Ascending aorta (tissue), 2 donors: ENCODE measurements at regions of chr22 and their contacts with region 1.

Region 1: DNA sequence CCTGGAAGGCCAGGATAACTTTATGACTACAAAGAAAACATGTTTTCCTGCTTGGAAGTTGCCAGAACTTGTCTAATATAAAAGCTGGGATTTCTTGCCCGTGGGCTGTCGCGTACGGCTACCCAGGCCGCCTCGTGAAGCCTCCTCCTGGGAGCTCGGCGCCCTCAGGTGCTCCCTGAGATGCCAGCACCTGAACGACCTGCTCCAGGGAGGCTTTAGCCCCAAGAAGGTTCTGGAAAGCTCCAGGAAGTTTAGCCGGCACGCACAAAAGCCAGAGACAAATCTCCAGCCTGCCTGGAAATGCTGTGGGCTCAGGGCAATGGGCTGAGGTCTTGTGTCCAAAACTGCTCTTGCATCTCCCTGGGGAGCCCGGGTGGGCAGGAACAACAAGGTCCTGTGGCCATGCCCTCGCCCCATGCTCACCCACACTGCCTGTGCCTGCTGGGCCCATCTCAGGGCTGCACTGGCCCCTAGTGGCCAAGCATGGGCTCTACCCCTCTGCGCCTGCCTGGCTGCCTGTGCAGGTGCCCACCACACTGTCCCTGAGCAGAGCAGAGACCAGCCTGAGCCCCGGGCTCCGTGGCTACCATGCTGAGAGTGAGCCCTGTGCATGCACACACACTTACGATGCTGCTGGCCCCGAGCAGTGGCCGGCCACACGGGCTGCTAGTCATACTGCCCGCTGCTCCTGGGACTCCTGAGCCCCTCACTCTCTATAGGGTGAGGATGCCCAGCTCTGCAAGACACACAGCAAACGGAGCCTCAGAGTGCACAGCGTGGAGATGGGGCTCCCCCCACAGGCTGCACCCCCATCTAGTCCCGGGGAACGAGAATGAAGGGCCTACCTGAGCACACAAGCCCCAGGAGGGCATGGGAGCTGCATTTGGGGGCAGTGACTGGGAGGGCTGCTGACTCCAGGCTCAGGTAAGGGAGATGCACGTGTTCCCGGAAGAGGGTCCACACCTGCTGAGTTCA is 4.9 kb upstream of the CELSR1 start:
- DNase-seq: peak in 1 of 2 donors; percentile 78
- H3K4me3 ChIP-seq: no peak overlapping the region
- H3K27ac ChIP-seq: no peak overlapping the region
- H3K4me1 ChIP-seq: peaks cover 8 to 21% of the 10 kb centered on the region in 2 donors
- H3K27me3 ChIP-seq: peaks cover 8% of the 10 kb centered on the region
- CTCF ChIP-seq: peak; percentile 76 to 85 (median 85)

Region 2: DNA sequence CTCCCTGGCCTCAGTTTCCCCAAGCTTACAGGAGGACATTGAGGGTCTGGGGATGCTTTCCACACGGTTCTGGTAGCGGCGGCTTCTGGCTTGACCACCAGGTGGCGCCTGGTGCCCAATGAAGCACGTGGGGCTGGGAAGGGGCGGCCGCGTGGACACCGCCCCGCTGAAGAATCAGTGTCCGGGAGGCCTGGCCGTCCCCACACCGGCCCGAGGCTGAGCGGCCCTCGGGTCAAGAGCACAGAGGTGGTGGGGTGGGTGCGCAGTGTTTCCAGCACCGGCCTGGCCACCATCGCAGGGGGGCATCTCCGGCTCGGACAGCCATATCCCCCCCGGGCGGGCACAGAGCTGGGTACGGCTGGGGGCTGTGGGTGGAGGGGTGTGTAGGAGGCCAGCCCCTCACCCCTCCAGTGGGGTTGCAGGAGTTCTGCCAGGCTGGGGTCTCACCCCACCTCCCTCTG is 419.8 kb before region 1 on chr22:
- intact Hi-C with region 1: loop called (anchors 1 kb)
- DNase-seq: no peak
- H3K4me3 ChIP-seq: peak overlapping the region in 1 of 2 donors; percentile 14
- H3K27ac ChIP-seq: no peak overlapping the region
- H3K4me1 ChIP-seq: peaks cover 0 to 4% of the 10 kb centered on the region in 2 donors
- H3K27me3 ChIP-seq: no peaks in the 10 kb centered on the region
- CTCF ChIP-seq: peak; percentile 87 to 98 (median 97)

Region 3: GRCh38 chr22:46171940-46172339 is 370.4 kb before region 1 on chr22:
- intact Hi-C with region 1: no loop called
- DNase-seq: peak in 1 of 2 donors; percentile 56
- H3K4me3 ChIP-seq: no peak overlapping the region
- H3K27ac ChIP-seq: no peak overlapping the region
- H3K4me1 ChIP-seq: peaks cover 0 to 4% of the 10 kb centered on the region in 2 donors
- H3K27me3 ChIP-seq: no peaks in the 10 kb centered on the region
- CTCF ChIP-seq: no peak

Region 4: DNA sequence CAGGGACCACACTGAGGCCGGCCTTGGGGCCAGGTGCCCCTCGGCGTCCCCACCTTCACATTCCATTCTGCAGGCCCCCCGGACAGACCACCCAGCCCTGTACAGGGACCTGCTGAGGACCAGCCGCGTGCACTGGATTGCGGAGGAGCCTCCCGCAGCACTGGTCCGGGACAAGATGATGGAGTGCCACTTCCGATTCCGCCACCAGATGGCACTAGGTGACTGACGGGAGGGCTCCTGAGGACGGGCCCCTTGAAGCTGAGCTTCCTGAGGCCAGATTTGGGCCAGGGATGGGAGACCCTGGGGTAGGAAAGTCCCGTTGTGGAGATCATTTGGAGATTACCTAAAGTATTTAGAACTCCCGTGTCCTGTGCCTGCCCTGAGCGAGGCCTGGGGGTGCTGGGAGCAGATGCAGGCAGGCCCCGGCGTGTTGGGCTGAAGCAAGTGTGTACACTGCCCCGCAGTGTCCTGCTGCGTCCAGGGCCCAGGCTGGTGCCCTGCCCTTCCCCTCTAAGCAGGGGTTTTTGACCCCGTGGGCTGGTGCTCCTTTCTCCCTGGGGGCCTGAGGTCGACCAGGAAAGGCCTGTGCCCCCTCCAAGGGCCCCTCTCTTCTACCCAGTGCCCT is 186.8 kb before region 1 on chr22:
- intact Hi-C with region 1: loop called (anchors 1 kb)
- DNase-seq: no peak
- H3K4me3 ChIP-seq: no peak overlapping the region
- H3K27ac ChIP-seq: no peak overlapping the region
- H3K4me1 ChIP-seq: no peaks in the 10 kb centered on the region
- H3K27me3 ChIP-seq: no peaks in the 10 kb centered on the region
- CTCF ChIP-seq: peak; percentile 22 to 68 (median 46)

Region 5: DNA sequence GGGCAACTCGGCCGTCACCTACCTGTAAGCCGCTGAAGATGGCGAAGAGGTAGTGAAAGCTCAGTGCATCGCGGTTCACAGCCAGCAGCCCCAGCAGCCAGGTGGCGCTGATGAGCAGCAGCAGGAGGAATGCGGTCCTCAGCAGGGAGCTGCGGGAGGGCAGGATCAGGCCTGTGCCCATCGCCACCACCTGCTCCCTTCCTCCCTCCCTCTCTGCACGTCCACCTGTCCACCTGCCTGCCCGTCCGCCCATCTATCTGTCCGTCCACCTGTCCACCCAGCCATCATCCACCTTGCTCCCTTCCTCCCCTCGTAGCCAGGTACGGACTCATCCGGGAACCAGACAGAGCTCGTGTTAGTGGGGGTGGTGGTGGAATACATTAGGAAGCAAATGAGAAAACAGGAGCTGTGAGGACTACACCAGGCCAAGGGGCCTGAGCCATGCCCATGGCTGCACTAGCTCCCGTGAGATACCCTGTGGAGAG is 174.5 kb before region 1 on chr22:
- intact Hi-C with region 1: loop called (anchors 1 kb)
- DNase-seq: no peak
- H3K4me3 ChIP-seq: no peak overlapping the region
- H3K27ac ChIP-seq: no peak overlapping the region
- H3K4me1 ChIP-seq: no peaks in the 10 kb centered on the region
- H3K27me3 ChIP-seq: no peaks in the 10 kb centered on the region
- CTCF ChIP-seq: peak; percentile 34 to 59 (median 47)

Region 6: DNA sequence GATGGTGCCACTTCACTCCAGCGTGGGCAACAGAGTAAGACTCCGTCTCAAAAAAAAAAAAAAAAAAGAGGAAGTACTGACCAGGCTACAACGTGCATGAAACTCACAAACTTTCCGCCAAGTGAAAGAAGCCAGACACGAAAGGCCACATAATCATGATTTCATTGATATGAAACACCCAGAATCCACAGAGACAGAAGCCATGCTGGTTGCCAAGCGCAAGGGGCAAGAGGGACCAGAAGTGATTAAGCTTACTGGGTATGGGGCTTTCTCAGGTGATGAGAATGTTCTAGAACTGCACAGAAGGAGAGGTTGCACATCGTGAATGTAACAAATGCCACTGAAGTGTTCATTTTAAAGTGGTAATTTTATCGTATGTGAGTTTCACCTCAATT is 65.8 kb before region 1 on chr22:
- intact Hi-C with region 1: no loop called
- DNase-seq: no peak
- H3K4me3 ChIP-seq: no peak overlapping the region
- H3K27ac ChIP-seq: no peak overlapping the region
- H3K4me1 ChIP-seq: no peaks in the 10 kb centered on the region
- H3K27me3 ChIP-seq: no peaks in the 10 kb centered on the region
- CTCF ChIP-seq: no peak

Region 7: DNA sequence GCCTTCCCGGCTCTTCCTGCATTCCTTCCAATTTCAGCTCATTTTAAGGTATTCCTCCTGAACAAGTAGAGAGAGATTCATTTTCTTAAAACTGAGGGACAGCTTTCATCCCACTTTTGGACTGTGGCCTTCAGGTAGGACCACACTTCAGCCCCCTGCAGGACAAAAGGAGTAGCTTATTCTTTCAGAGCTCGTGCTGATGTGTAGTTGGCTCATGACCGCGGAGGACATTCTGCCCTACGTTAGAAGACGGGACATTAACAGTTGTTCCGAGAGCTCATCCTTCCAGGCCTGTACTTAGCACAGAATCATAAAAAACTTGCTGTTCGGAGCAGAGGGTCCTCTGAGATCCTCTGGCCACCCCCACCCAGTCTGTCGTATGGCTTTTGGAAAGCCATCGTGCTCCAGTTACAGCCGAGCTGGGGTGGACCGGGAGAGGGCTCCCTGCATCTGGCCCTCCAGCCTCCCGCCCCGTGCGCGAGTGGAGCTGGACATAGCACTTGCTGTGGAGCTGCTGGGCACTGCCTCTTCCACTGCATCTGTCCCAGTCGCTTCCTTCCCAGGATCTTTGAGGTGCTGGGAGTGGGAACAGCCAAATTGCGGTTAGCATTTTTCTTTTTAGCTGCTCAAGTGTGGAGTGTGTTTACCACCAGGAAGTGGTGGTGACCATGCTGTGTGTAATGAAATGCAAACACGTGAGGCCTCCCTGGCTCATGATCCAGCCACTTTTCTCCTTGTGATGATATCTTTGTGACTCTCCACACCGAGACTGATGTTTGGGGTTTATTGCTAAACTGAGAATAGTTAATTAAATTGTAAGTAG is 470.5 kb after region 1 on chr22:
- intact Hi-C with region 1: no loop called
- DNase-seq: no peak
- H3K4me3 ChIP-seq: no peak overlapping the region
- H3K27ac ChIP-seq: no peak overlapping the region
- H3K4me1 ChIP-seq: no peaks in the 10 kb centered on the region
- H3K27me3 ChIP-seq: no peaks in the 10 kb centered on the region
- CTCF ChIP-seq: no peak